Activated CD8-positive, alpha-beta T cell treated with anti-CD3 and anti-CD28 coated beads, Interleukin-2, amount 10 ng/mL, durations not matched to agents 7 days and 5 days (primary cell): ENCODE measurements at regions of chr5 and their contacts with region 1.

Region 1: GRCh38 chr5:41903892-41904799 is at the start of gene RIMOC1:
- DNase-seq: peak; percentile 98
- ATAC-seq: peak; percentile 96
- H3K4me3 Mint-ChIP-seq: peak within 1 kb of the TSS; percentile 92
- H3K27ac Mint-ChIP-seq: peak within 1 kb of the TSS; percentile 95
- H3K4me1 Mint-ChIP-seq: peaks cover 45% of the 10 kb centered on the region
- H3K27me3 Mint-ChIP-seq: peaks cover 7% of the 10 kb centered on the region
- total RNA-seq, gene RIMOC1: 19.9 to 20.8 TPM

Region 2: DNA sequence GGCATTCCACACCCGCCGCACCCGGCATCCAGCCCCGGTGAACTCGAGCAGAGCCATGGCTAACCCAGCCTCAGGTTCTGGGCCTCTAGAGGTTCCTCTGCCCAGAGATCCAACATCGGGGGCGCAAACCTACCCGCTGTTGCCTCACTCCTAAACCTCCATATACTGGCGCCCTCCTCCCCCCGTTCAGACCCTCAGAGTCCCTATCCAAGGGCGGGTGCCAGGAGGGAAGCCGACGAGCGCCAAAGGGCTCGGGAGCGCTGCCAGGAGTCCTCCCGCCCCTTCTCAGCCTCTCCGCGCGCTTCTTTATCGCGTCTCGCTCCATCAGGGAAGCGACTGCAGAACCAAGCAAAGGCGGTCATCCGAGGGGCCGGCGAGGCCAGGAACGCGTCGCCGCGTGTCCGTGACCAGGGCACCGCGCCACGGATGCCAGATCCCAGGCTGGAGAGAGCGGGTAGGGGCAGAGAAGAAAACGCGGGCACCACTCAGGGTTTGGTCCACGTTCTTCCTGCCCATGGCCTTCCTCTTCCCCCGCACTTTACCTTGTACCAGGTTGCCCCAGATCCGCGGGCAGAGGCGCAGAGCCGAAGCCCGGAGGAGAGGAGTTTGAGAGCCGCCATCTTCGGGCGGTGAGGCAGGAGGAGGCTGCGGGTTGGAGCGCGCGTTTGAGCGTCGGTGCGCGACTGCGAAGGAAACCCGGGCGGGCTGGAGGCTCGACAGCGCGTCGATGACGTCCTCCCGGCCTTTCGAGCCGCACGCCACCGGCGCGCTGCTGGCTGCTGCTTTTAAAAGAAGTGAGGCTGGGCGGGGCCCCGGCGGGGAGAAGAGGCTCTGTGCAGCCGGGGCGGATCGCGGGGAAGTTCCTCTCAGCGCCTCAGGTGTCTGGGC is 34.2 kb before region 1 on chr5 and contains the start of gene OXCT1:
- CTCF ChIA-PET with region 1: interaction called, 4 read pairs
- POLR2A ChIA-PET with region 1: interaction called, 16 read pairs
- DNase-seq: peak; percentile 95
- ATAC-seq: peak; percentile 95
- H3K4me3 Mint-ChIP-seq: peak within 1 kb of the TSS; percentile 88
- H3K27ac Mint-ChIP-seq: peak within 1 kb of the TSS; percentile 91
- H3K4me1 Mint-ChIP-seq: peaks cover 57% of the 10 kb centered on the region
- H3K27me3 Mint-ChIP-seq: no peaks in the 10 kb centered on the region
- total RNA-seq, gene OXCT1: 59.3 to 61.0 TPM

Region 3: GRCh38 chr5:41876678-41877077 is 27.5 kb before region 1 on chr5:
- CTCF ChIA-PET with region 1: interaction called, 3 read pairs
- POLR2A ChIA-PET with region 1: interaction called, 16 read pairs
- DNase-seq: no peak
- ATAC-seq: no peak
- H3K4me3 Mint-ChIP-seq: no peak overlapping the region
- H3K27ac Mint-ChIP-seq: no peak overlapping the region
- H3K4me1 Mint-ChIP-seq: peaks cover 12% of the 10 kb centered on the region
- H3K27me3 Mint-ChIP-seq: peaks cover 7% of the 10 kb centered on the region

Region 4: GRCh38 chr5:41893074-41893851 is 10.9 kb before region 1 on chr5:
- CTCF ChIA-PET with region 1: interaction called, 7 read pairs
- POLR2A ChIA-PET with region 1: interaction called, 14 read pairs
- DNase-seq: no peak
- ATAC-seq: no peak
- H3K4me3 Mint-ChIP-seq: peak overlapping the region; percentile 4
- H3K27ac Mint-ChIP-seq: no peak overlapping the region
- H3K4me1 Mint-ChIP-seq: peaks cover 22% of the 10 kb centered on the region
- H3K27me3 Mint-ChIP-seq: peaks cover 28% of the 10 kb centered on the region

Region 5: GRCh38 chr5:41924872-41925554 is 20.9 kb after region 1 on chr5 and contains the start of gene FBXO4:
- CTCF ChIA-PET with region 1: interaction called, 6 read pairs
- POLR2A ChIA-PET with region 1: interaction called, 39 read pairs
- DNase-seq: peak; percentile 89
- ATAC-seq: peak; percentile 98
- H3K4me3 Mint-ChIP-seq: peak within 1 kb of the TSS; percentile 86
- H3K27ac Mint-ChIP-seq: peak within 1 kb of the TSS; percentile 89
- H3K4me1 Mint-ChIP-seq: peaks cover 14% of the 10 kb centered on the region
- H3K27me3 Mint-ChIP-seq: no peaks in the 10 kb centered on the region
- total RNA-seq, gene FBXO4: 11.6 to 14.4 TPM

Region 6: DNA sequence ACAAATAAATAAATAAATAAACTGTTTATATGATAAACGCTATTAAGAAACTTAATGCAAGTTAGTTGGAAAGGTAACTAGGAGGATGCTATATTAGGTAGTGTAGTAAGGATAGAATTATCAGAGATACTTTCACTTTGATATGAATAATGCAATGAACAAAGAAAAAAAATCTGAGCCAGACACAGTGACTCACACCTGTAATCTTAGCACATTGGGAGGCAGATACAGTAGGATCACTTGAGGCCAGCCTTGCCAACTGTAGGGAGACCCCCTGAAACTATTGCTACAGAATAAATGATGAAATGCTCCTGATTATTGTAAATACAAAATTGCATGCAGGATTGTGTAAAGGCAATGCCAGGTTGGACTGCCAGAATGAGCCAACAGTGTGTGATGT is 1026.8 kb after region 1 on chr5:
- CTCF ChIA-PET with region 1: no interaction called
- POLR2A ChIA-PET with region 1: no interaction called
- DNase-seq: no peak
- ATAC-seq: no peak
- H3K4me3 Mint-ChIP-seq: no peak overlapping the region
- H3K27ac Mint-ChIP-seq: no peak overlapping the region
- H3K4me1 Mint-ChIP-seq: no peaks in the 10 kb centered on the region
- H3K27me3 Mint-ChIP-seq: peaks cover 5% of the 10 kb centered on the region